Ascending aorta (tissue), 2 donors: ENCODE measurements at regions of chr15 and their contacts with region 1.

Region 1: DNA sequence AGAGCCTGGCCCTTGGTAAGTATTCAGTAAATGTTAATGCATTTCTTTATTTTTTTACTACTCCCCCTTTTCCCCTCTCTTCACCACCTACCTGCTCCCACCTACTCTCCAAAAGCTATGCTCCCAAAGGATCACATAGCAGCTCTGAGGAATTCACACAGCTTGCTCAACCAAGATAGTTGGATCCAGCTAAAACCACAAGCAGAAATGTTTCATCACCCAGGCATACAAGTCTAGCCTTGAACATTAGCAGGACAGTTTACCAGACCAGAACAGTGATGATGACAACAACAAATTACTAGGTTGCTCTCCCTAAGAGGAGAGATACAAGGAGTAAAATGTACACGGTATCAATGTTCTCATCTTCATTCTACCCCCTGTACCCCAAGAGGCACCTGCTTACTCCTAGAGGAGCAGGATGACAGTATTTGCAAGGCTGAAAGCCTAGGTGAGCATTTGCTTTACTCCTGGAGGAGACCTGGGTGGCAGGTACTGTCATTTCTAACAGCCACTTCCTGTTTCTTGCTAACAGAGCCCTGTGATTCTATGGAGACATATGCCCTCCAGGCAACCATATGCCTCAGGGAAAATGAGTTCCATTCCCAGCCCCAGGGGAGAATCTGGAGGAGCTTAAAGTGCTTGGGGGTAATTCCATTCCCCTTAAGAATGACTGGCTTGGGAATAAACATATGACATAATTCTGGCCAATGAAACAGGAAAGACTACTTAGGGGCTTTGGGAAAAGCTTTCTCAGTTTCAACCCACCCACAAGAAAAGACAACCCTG is 237.5 kb downstream of the NTRK3 start:
- DNase-seq: no peak
- H3K4me3 ChIP-seq: no peak overlapping the region
- H3K27ac ChIP-seq: no peak overlapping the region
- H3K4me1 ChIP-seq: peaks cover 4 to 15% of the 10 kb centered on the region in 2 donors
- H3K27me3 ChIP-seq: no peaks in the 10 kb centered on the region
- CTCF ChIP-seq: no peak

Region 2: DNA sequence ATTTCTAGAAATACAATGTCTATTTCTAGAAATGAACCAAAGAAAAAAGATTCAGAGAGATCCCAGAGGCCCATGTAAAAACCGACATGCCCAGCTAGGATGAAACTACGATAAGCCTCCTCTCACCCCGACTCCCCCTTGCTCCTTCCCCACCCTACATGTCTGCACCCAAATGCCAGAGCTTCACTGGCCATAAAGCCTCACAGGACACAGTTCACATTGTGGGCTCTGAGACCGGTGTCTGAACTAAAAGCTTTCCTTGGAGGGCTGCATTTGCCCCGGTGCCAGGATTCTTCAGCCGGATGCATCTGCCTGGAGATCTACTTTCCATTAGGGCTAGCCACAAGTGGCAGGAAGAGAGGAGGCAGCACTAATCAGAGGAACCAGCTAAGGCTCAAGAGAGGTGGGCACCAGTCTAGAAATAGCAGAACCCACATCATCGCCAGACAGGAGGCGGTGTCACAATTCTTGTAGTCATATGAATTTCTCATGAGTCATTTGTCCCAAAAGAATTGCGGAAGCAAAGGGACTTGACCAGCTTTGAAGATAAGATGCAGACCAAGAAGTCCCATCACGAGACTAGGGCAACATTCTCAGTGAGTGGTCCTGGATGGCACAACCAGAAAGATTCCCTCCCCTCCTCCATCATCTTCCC is 116.2 kb before region 1 on chr15:
- intact Hi-C with region 1: loop called (anchors 5 kb)
- DNase-seq: peak; percentile 41 to 89
- H3K4me3 ChIP-seq: peak overlapping the region in 1 of 2 donors; percentile 40
- H3K27ac ChIP-seq: peak overlapping the region; percentile 82 to 88
- H3K4me1 ChIP-seq: peaks cover 0 to 6% of the 10 kb centered on the region in 2 donors
- H3K27me3 ChIP-seq: no peaks in the 10 kb centered on the region
- CTCF ChIP-seq: peak in 1 of 3 experiments; percentile 38

Region 3: DNA sequence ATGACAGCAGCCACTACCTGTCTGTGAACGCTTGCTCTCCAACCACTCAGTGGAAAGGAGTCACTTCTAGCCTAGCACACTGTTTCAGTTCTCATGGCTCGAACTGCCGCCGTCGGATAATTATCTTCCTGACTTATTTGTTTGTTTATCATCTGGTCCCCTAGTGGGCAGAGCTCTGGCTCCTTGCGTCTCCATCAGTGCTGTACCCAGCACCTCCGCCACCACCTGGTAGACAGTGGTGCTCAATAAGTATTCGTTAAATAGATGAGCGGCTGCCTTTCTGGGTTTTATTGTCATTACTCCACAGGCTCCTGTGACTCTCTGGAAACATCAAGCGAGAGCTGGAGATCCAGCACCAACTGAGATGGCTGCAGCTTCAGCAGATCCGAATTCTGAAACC is 60.0 kb before region 1 on chr15:
- intact Hi-C with region 1: loop called (anchors 10 kb)
- DNase-seq: no peak
- H3K4me3 ChIP-seq: no peak overlapping the region
- H3K27ac ChIP-seq: no peak overlapping the region
- H3K4me1 ChIP-seq: peaks cover 0 to 12% of the 10 kb centered on the region in 2 donors
- H3K27me3 ChIP-seq: no peaks in the 10 kb centered on the region
- CTCF ChIP-seq: no peak

Region 4: GRCh38 chr15:87973501-87974215 is 45.4 kb before region 1 on chr15:
- intact Hi-C with region 1: loop called (anchors 5 kb)
- DNase-seq: peak in 1 of 2 donors; percentile 61
- H3K4me3 ChIP-seq: no peak overlapping the region
- H3K27ac ChIP-seq: peak overlapping the region; percentile 25 to 69
- H3K4me1 ChIP-seq: peaks cover 6 to 33% of the 10 kb centered on the region in 2 donors
- H3K27me3 ChIP-seq: no peaks in the 10 kb centered on the region
- CTCF ChIP-seq: no peak